Adrenal gland (tissue), 19 donors: ENCODE measurements at regions of chr17 and their contacts with region 1.

Region 1: GRCh38 chr17:77086433-77087010 is 54.2 kb upstream of the SEC14L1 start:
- DNase-seq: peak; percentile 84 to 97 (median 92)
- H3K4me3 ChIP-seq: no peak overlapping the region
- H3K27ac ChIP-seq: no peak overlapping the region
- H3K4me1 ChIP-seq: peaks cover 8 to 24% of the 10 kb centered on the region in 2 donors
- H3K27me3 ChIP-seq: no peaks in the 10 kb centered on the region
- CTCF ChIP-seq: peak; percentile 86 to 95 (median 90)
- POLR2A ChIP-seq: peak in 1 of 2 donors; percentile 8

Region 2: GRCh38 chr17:77200711-77201110 is 114.2 kb after region 1 on chr17:
- intact Hi-C with region 1: loop called in 1 of 2 experiments (anchors 5 kb)
- DNase-seq: peak in 6 of 7 donors; percentile 47 to 66 (median 54)
- H3K4me3 ChIP-seq: no peak overlapping the region
- H3K27ac ChIP-seq: peak overlapping the region in 2 of 5 donors; percentile 4 to 68
- H3K4me1 ChIP-seq: peaks cover 4 to 15% of the 10 kb centered on the region in 2 donors
- H3K27me3 ChIP-seq: no peaks in the 10 kb centered on the region
- CTCF ChIP-seq: peak in 3 of 6 experiments; percentile 11 to 29 (median 23)
- POLR2A ChIP-seq: no peak

Region 3: GRCh38 chr17:77214743-77215142 is 128.2 kb after region 1 on chr17:
- intact Hi-C with region 1: loop called in 1 of 2 experiments (anchors 5 kb)
- DNase-seq: peak in 4 of 7 donors; percentile 43 to 73 (median 50)
- H3K4me3 ChIP-seq: no peak overlapping the region
- H3K27ac ChIP-seq: no peak overlapping the region
- H3K4me1 ChIP-seq: peaks cover 0 to 6% of the 10 kb centered on the region in 2 donors
- H3K27me3 ChIP-seq: no peaks in the 10 kb centered on the region
- CTCF ChIP-seq: peak; percentile 10 to 64 (median 47)
- POLR2A ChIP-seq: no peak

Region 4: DNA sequence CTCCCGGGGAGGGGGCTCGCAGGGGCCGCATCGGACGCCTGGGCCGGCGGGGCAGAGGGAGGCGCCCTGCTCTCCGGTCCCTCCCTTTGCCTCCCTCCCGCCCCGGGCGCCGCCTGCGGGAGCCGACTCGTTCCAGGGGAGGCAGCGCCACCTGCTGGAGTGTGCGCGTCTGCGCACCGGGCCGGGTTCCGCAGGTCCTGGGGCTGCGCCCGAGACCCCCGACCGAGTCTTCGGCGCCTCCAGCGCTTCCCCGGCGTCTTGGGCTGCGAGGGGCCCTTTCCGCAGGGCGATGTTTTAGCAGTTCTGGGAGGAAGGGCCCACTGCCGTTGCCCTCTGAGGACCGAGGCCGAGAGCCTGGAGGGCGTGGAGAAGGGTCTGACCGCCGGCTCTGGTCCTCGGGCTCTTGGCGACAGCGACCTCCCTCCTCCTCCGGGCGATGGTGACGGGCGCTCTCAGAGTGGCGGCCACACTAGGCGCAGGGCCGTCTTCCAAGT is 160.6 kb after region 1 on chr17:
- intact Hi-C with region 1: loop called (anchors 2 kb)
- DNase-seq: peak; percentile 69 to 87 (median 85)
- H3K4me3 ChIP-seq: peak overlapping the region in 2 of 4 donors; percentile 50 to 74
- H3K27ac ChIP-seq: peak overlapping the region in 1 of 5 donors; percentile 57
- H3K4me1 ChIP-seq: peaks cover 0 to 9% of the 10 kb centered on the region in 2 donors
- H3K27me3 ChIP-seq: no peaks in the 10 kb centered on the region
- CTCF ChIP-seq: peak; percentile 89 to 99 (median 98)
- POLR2A ChIP-seq: no peak